Caco-2 (cell line): ENCODE measurements at regions of chr12 and their contacts with region 1.

Region 1: GRCh38 chr12:111126331-111126730 is 206.0 kb upstream of the MYL2 start:
- DNase-seq: no peak
- H3K4me3 ChIP-seq: no peak overlapping the region
- H3K4me3 Mint-ChIP-seq: no peak overlapping the region
- H3K27ac Mint-ChIP-seq: no peak overlapping the region
- H3K4me1 ChIP-seq: no peaks in the 10 kb centered on the region
- H3K4me1 Mint-ChIP-seq: no peaks in the 10 kb centered on the region
- H3K27me3 ChIP-seq: no peaks in the 10 kb centered on the region
- H3K27me3 Mint-ChIP-seq: peaks cover 4% of the 10 kb centered on the region
- CTCF ChIP-seq: no peak

Region 2: DNA sequence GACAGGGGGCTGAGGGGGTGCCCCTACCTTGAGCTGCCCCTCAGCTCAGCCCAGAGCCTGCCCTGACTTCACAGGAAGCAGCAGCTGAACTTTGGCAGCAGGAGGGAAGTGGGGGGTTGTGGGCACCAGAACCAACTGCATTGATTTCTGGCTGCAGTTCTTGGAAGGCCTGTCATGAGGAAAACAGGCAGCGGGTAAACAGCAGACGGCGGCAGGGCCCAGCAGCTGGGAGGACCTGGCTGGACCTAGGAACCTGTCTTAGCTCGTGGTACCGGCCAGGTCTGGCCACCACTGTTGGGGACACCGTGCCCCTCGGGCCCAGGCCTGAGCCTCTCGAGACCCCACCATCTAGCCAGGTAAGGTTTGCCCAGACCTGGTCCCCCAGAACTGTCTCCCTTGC is 51.8 kb before region 1 on chr12:
- CTCF ChIA-PET with region 1: no interaction called
- POLR2A ChIA-PET with region 1: no interaction called
- intact Hi-C with region 1: no loop called
- DNase-seq: no peak
- H3K4me3 ChIP-seq: no peak overlapping the region
- H3K4me3 Mint-ChIP-seq: no peak overlapping the region
- H3K27ac Mint-ChIP-seq: no peak overlapping the region
- H3K4me1 ChIP-seq: no peaks in the 10 kb centered on the region
- H3K4me1 Mint-ChIP-seq: no peaks in the 10 kb centered on the region
- H3K27me3 ChIP-seq: no peaks in the 10 kb centered on the region
- H3K27me3 Mint-ChIP-seq: peaks cover 15% of the 10 kb centered on the region
- CTCF ChIP-seq: no peak

Region 3: GRCh38 chr12:111607239-111607638 is 480.9 kb after region 1 on chr12:
- CTCF ChIA-PET with region 1: no interaction called
- POLR2A ChIA-PET with region 1: interaction called, 14 read pairs
- intact Hi-C with region 1: no loop called
- DNase-seq: no peak
- H3K4me3 ChIP-seq: no peak overlapping the region
- H3K4me3 Mint-ChIP-seq: no peak overlapping the region
- H3K27ac Mint-ChIP-seq: no peak overlapping the region
- H3K4me1 ChIP-seq: no peaks in the 10 kb centered on the region
- H3K4me1 Mint-ChIP-seq: no peaks in the 10 kb centered on the region
- H3K27me3 ChIP-seq: no peaks in the 10 kb centered on the region
- H3K27me3 Mint-ChIP-seq: no peaks in the 10 kb centered on the region
- CTCF ChIP-seq: no peak